A549 (cell line): ENCODE measurements at regions of chr18 and their contacts with region 1.

Region 1: DNA sequence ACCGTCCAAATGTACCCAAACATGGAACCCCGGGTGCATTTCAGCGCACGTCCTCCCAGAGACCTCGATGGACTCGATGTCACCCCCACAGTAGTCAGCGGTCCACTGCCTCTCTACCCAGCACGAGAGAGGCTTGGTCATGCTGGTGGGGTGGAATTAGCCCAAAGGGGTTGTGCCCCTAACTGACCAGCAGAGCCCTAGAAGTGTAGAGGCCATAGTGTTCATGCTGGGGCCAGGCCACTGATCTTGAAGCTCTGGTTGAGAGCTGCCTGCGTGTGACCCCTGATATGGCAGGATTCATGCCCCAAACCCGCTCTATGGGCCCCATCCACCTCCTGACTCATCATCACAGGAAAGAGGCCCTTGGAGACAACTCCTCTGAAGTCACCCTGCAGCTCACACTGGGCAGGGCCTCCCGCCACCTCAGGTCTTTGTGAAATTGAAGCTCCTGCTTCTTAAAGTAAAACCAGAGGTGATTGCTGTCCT is 12.1 kb upstream of the TUBB6 start:
- DNase-seq: no peak
- ATAC-seq: no peak; a peak in 1 of 6 replicates
- H3K4me3 ChIP-seq: no peak overlapping the region
- H3K27ac ChIP-seq: no peak overlapping the region
- H3K4me1 ChIP-seq: no peaks in the 10 kb centered on the region
- CTCF ChIP-seq: no peak
- EP300 ChIP-seq: no peak
- POLR2A ChIP-seq: no peak
- RAD21 ChIP-seq: no peak

Region 2: DNA sequence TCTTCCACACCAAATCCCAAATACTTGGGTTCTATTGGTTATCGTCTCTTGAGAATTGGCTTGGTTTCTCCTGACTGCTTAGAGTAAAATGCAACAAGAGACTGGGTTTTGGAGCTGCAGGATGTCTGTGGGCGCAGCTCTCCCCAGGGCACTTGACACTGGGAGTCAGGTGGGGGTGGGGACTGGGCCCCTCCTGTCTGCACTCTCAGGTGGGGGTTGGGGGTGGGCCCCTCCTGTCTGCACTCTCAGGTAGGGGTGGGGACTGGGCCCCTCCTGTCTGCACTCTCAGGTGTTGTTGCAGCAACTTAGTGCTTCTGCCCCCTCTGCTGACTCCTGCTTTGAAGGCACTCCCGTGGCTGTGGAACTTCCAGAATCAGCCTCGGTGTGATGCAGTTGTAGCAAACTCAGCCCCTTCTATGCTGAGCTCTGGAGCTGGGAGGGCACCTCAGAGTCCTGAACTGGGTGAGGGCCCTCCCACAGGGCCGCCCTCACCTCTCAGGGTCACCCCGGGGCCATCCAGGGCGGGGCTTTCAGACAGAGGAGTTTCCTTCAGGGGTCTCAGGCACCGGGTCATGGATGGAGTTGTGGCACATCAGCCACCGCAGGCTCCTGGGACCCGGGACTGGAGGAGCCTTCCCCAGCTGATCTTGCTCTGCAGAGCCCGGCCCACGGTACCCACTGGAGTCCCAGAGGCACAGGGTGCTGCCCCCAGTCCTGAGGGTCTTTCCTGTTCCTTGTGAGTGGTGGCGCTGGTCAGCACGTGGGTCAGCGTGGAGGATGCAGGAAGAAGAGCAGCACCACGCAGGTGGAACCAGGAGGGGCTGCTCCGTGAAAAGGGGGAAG is 64.7 kb before region 1 on chr18:
- CTCF ChIA-PET with region 1: no interaction called
- POLR2A ChIA-PET with region 1: no interaction called
- DNase-seq: no peak
- ATAC-seq: no peak
- H3K4me3 ChIP-seq: no peak overlapping the region
- H3K27ac ChIP-seq: no peak overlapping the region
- H3K4me1 ChIP-seq: no peaks in the 10 kb centered on the region
- CTCF ChIP-seq: no peak
- EP300 ChIP-seq: no peak
- POLR2A ChIP-seq: no peak
- RAD21 ChIP-seq: no peak

Region 3: DNA sequence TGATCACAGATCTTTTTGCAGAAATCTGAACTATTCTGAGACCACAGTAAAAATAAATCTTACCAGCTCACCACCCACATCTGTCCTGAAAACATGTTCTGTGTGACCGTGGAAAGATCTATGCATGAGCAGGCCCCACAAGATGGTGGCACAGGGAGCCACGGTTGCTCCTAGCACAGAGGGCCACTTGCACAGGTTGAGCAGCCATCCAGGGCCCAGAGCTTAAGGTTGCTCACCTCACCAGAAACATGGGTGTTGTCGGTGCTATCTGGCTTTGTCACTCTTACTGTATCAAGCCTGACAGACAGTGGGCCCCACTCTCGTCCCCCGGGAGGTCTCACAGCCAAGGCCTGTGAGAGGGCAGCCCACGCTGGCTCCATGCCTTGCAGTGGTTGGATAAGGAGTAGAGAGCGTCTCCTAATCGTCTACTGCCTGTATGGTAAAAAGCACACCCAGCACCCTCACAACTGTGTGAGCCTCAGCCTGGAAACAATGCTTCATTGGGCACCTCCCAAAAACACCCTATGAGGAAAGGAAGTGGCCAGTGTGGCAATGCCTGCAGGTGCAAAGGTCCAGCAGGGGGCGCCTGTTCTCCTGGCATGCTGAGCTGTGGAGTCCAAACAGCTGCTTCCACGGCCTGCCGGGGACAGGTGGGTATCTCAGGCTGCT is 31.7 kb after region 1 on chr18:
- CTCF ChIA-PET with region 1: interaction called, 11 read pairs
- POLR2A ChIA-PET with region 1: no interaction called
- DNase-seq: peak; percentile 77
- ATAC-seq: peak; percentile 92 to 93
- H3K4me3 ChIP-seq: no peak overlapping the region
- H3K27ac ChIP-seq: no peak overlapping the region
- H3K4me1 ChIP-seq: peaks cover 4% of the 10 kb centered on the region; the same call in 1 of the 3 replicates
- CTCF ChIP-seq: peak; percentile 66
- EP300 ChIP-seq: no peak
- POLR2A ChIP-seq: no peak
- RAD21 ChIP-seq: peak; percentile 30 to 35; a peak in 4 of 5 replicates

Region 4: DNA sequence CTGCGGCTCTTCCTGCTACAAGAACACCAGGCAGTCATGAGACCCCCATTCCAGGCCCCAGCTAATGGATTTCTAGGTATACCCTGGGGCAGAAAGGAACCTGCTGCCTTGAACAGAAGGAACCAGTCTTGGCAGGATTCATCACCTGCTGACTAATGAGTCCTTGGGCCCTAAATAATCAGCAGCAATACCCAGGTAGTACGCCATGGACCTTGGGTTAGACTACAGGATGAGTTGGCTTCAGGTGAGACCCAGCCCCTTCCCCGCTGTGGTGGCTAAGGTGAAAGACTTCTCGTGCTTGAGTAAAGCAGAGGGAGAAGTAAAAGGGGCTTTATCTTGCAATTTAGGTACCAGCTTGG is 256.9 kb after region 1 on chr18:
- CTCF ChIA-PET with region 1: no interaction called
- POLR2A ChIA-PET with region 1: no interaction called
- DNase-seq: no peak
- ATAC-seq: no peak
- H3K4me3 ChIP-seq: no peak overlapping the region
- H3K27ac ChIP-seq: peak overlapping the region in 1 of 2 experiments; percentile 26; a peak in 1 of 6 replicates
- H3K4me1 ChIP-seq: peaks cover 16% of the 10 kb centered on the region
- CTCF ChIP-seq: no peak
- EP300 ChIP-seq: no peak
- POLR2A ChIP-seq: no peak
- RAD21 ChIP-seq: no peak